ENCODE measurements at regions of chr2 and their contacts with region 1.

Region 1: GRCh38 chr2:30208452-30208851 is 22.9 kb upstream of the LBH start:
- DNase-seq: peak; percentile 45 to 66 (median 57)
- H3K4me3 ChIP-seq: no peak overlapping the region
- H3K27ac ChIP-seq: no peak overlapping the region
- H3K4me1 ChIP-seq: peaks cover 0 to 3% (median 1%) of the 10 kb centered on the region in 4 experiments
- H3K27me3 ChIP-seq: peaks cover 0 to 2% (median 0%) of the 10 kb centered on the region in 5 experiments

Region 2: GRCh38 chr2:30225131-30225762 is 16.8 kb after region 1 on chr2:
- CTCF ChIA-PET with region 1: interaction called, 42 read pairs
- POLR2A ChIA-PET with region 1: no interaction called
- DNase-seq: peak; percentile 63 to 88 (median 83)
- H3K4me3 ChIP-seq: peak overlapping the region; percentile 23 to 84 (median 64)
- H3K27ac ChIP-seq: peak overlapping the region; percentile 77 to 93
- H3K4me1 ChIP-seq: peaks cover 7 to 38% (median 34%) of the 10 kb centered on the region in 4 experiments
- H3K27me3 ChIP-seq: no peaks in the 10 kb centered on the region

Region 3: DNA sequence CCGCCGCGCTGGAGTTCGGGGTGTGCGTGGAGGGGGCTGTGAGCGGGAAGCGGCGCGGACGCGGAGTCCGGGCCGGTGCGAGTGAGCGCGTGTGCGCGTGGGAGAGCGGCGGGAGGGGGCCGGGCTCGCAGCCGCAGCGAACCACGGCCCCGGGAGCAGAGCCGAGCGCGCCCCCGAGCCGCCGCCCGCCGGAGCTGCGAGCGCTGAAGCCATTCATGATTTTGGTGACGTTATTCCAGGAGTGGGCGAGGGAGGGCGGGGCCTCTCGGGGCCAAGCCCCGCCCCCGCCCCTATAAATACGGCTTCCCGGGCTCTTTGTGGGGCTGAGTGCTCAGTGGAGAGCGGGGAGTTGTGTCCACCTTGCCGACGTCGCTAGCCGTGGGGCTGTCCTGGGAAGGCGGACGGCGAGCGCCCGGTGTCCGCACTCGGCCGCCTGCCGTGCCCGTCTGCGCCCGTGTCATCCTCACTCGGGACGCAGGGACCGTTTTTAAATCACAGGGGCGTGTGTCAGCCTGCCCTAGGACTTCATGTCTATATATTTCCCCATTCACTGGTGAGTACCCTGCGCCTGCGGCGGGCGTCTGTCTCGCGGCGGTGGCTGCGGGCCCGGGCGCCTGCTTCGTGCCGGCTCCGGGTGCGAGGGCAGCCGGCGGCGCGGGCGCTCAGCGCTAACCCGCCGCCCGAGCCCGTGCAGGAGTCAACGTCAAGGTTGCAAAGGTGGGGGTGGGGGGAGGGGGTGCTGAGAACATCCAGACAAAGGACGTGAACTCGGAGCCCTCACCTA is 23.0 kb after region 1 on chr2 and contains the start of gene LBH:
- CTCF ChIA-PET with region 1: interaction called, 23 read pairs
- POLR2A ChIA-PET with region 1: no interaction called
- DNase-seq: peak; percentile 84 to 90 (median 88)
- H3K4me3 ChIP-seq: peak within 1 kb of the TSS; percentile 68 to 87 (median 80)
- H3K27ac ChIP-seq: peak within 1 kb of the TSS in 1 of 2 experiments; percentile 74
- H3K4me1 ChIP-seq: peaks cover 6 to 31% (median 30%) of the 10 kb centered on the region in 4 experiments
- H3K27me3 ChIP-seq: peaks cover 0 to 3% (median 0%) of the 10 kb centered on the region in 5 experiments

Region 4: GRCh38 chr2:30702694-30703093 is 494.2 kb after region 1 on chr2:
- CTCF ChIA-PET with region 1: interaction called, 196 read pairs
- POLR2A ChIA-PET with region 1: no interaction called
- DNase-seq: no peak
- H3K4me3 ChIP-seq: no peak overlapping the region
- H3K27ac ChIP-seq: no peak overlapping the region
- H3K4me1 ChIP-seq: no peaks in the 10 kb centered on the region
- H3K27me3 ChIP-seq: no peaks in the 10 kb centered on the region

Measured in common myeloid progenitor, CD34-positive (primary cell).